ENCODE measurements at regions of chr4 and their contacts with region 1.

Region 1: GRCh38 chr4:15001869-15002658 is at the start of gene CPEB2:
- DNase-seq: peak; percentile 99
- H3K4me3 ChIP-seq: peak within 1 kb of the TSS; percentile 91 to 97 (median 96)
- H3K27ac ChIP-seq: peak within 1 kb of the TSS; percentile 99 to 100 (median 100)
- H3K4me1 ChIP-seq: peaks cover 10 to 24% (median 19%) of the 10 kb centered on the region in 4 donors
- H3K27me3 ChIP-seq: no peaks in the 10 kb centered on the region
- CTCF ChIP-seq: no peak
- EP300 ChIP-seq: peak; percentile 79
- POLR2A ChIP-seq: peak; percentile 98
- total RNA-seq, gene CPEB2: 23.7 to 35.7 (median 25.6) TPM

Region 2: GRCh38 chr4:14862891-14863290 is 139.2 kb before region 1 on chr4:
- intact Hi-C with region 1: loop called (anchors 5 kb)
- DNase-seq: no peak
- H3K4me3 ChIP-seq: peak overlapping the region; percentile 11 to 26 (median 18)
- H3K27ac ChIP-seq: peak overlapping the region; percentile 80 to 87 (median 84)
- H3K4me1 ChIP-seq: peaks cover 16 to 44% (median 40%) of the 10 kb centered on the region in 4 donors
- H3K27me3 ChIP-seq: no peaks in the 10 kb centered on the region
- CTCF ChIP-seq: no peak
- EP300 ChIP-seq: no peak
- POLR2A ChIP-seq: no peak

Region 3: DNA sequence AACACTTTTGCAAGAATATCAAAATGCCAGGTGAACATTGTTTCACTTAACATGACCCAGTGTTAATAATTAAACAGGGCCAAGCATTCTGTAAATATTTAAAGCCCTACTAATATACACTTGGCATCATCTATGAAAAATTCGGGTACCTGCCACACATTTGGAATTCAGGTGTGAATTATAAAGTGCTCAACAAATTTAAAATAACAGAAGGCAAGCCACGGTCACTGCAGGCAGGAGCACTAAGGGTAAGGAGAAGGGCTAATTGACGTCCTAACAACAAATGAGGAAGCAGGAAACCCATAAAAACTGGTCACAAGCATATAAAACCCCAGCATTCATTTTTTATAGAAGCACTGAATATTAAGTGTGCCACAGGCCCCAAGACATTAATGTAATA is 43.6 kb before region 1 on chr4:
- intact Hi-C with region 1: no loop called
- DNase-seq: no peak
- H3K4me3 ChIP-seq: no peak overlapping the region
- H3K27ac ChIP-seq: no peak overlapping the region
- H3K4me1 ChIP-seq: no peaks in the 10 kb centered on the region
- H3K27me3 ChIP-seq: no peaks in the 10 kb centered on the region
- CTCF ChIP-seq: no peak
- EP300 ChIP-seq: no peak
- POLR2A ChIP-seq: no peak

Region 4: GRCh38 chr4:15457406-15458201 is 455.5 kb after region 1 on chr4:
- intact Hi-C with region 1: loop called (anchors 10 kb)
- DNase-seq: peak; percentile 68
- H3K4me3 ChIP-seq: peak overlapping the region in 1 of 4 donors; percentile 13
- H3K27ac ChIP-seq: peak overlapping the region; percentile 48 to 69 (median 61)
- H3K4me1 ChIP-seq: peaks cover 17 to 38% (median 31%) of the 10 kb centered on the region in 4 donors
- H3K27me3 ChIP-seq: no peaks in the 10 kb centered on the region
- CTCF ChIP-seq: peak; percentile 75 to 76 (median 76)
- EP300 ChIP-seq: no peak
- POLR2A ChIP-seq: no peak

Region 5: GRCh38 chr4:15655229-15656037 is 653.4 kb after region 1 on chr4 and contains the start of gene FBXL5:
- intact Hi-C with region 1: loop called (anchors 10 kb)
- DNase-seq: peak; percentile 93
- H3K4me3 ChIP-seq: peak within 1 kb of the TSS; percentile 77 to 89 (median 88)
- H3K27ac ChIP-seq: peak within 1 kb of the TSS; percentile 95 to 99 (median 98)
- H3K4me1 ChIP-seq: peaks cover 35 to 47% (median 46%) of the 10 kb centered on the region in 4 donors
- H3K27me3 ChIP-seq: no peaks in the 10 kb centered on the region
- CTCF ChIP-seq: no peak
- EP300 ChIP-seq: no peak
- POLR2A ChIP-seq: no peak
- total RNA-seq, gene FBXL5: 67.8 to 141 (median 140) TPM

Measured in esophagus muscularis mucosa (tissue), 4 donors.